HEK293T (cell line): ENCODE measurements at regions of chr6 and their contacts with region 1.

Region 1: GRCh38 chr6:35503534-35503933 is 6.7 kb upstream of the TEAD3 start:
- DNase-seq: no peak

Region 2: GRCh38 chr6:35489995-35490733 is 13.4 kb before region 1 on chr6:
- CTCF ChIA-PET with region 1: no interaction called
- POLR2A ChIA-PET with region 1: no interaction called
- DNase-seq: no peak

Region 3: DNA sequence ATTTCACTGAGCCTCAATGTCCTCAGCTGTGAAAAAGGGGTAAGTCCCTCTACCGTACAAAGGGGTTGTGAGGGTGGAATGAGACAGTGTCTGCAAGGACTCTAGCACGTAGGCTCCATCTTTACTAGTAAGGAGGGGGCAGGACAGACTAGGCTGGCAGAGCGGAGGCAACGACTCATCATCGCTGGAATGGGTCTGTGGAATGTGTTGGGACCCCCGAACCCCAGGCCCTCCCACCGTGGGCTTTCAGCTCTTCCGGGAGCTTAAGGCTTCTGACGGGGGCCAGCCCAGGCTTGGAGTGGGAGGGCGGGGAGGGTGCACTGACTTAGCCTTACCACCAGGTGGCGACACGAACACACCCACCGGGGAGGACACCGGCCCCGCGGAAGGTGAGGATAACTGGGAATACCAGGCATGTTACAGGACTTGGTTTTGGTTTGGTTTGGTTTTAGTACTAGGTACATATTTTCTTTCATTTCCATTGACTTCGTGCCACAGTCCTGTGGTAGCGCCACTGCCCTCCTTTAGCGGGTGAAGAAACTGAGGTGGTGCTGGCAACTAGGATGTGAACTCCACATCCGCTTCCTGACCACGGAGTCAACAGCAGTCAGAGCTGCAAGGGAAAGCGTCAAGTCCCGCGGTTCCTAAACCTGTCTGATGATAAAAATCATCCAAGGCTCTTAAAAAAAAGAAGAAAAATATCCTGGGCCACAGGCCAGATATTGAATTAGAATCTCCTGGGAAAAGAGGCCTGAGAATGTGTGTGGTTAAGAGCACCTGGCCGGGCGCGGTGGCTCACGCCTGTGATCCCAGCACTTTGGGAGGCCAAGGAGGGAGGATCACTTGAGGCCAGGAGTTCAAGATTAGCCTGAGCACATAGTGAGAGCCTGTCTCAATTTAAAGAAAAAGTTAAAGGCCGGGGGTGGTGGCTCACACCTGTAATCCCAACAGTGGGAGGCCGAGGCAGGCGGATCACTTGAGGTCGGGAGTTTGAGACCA is 19.4 kb after region 1 on chr6:
- CTCF ChIA-PET with region 1: interaction called, 19 read pairs
- POLR2A ChIA-PET with region 1: no interaction called
- DNase-seq: peak; percentile 91